H1 (cell line): ENCODE measurements at regions of chr9 and their contacts with region 1.

Region 1: DNA sequence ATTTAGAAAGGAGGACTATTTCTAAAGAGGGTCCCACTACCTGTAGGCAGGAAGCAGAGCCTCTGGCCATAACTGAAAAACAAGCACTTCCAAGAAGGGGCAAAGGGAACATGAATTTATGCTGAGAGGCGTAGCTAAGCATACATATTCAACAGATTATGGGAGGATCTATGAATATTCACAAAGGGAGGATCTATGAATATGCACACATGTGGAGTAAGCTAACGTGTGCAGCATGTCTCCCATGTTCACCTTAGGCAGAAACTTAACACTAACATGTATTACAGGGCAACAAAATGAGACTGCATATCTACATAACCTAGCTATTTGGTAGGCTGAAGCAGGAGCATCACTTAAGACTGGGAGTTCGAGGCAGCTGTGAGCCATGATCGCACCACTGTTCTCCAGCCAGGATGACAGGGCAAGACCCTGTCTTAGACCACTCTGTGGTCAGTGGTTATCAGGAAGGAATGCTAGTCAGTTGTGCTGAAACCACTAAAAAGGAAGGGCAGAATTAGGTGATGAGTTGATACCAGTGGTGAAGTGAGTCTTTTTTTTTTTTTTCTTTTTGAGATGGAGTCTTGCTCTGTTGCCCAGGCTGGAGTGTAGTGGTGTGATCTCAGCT is 20.8 kb downstream of the FXN start:
- DNase-seq: no peak
- H3K4me3 ChIP-seq: no peak overlapping the region
- H3K27ac ChIP-seq: no peak overlapping the region
- H3K4me1 ChIP-seq: peaks cover 0 to 7% (median 2%) of the 10 kb centered on the region in 4 experiments; a peak in 4 of 7 replicates
- H3K27me3 ChIP-seq: no peaks in the 10 kb centered on the region
- CTCF ChIP-seq: no peak
- EP300 ChIP-seq: no peak
- POLR2A ChIP-seq: no peak
- RAD21 ChIP-seq: no peak

Region 2: DNA sequence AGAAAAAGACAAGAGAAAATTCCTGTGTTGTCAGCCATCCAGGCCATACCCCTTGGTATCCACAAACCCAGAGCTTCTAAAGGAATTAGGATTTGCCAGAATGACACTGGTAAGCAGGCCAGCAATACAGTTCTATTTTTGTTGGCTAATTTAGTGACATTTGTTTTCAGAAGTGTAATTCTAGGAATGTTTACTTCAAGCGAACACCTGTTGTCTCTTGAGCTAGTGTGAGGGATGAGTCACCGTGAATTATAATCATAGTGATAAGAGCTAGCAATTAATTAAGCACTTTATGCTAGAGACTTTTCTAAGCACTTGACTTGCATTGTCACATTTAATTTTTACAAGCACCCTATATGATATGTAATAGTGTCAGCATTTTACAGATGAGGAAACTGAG is 141.6 kb before region 1 on chr9:
- CTCF ChIA-PET with region 1: no interaction called
- POLR2A ChIA-PET with region 1: no interaction called
- DNase-seq: no peak
- H3K4me3 ChIP-seq: no peak overlapping the region
- H3K27ac ChIP-seq: no peak overlapping the region
- H3K4me1 ChIP-seq: no peaks in the 10 kb centered on the region
- H3K27me3 ChIP-seq: no peaks in the 10 kb centered on the region
- CTCF ChIP-seq: no peak
- EP300 ChIP-seq: no peak
- POLR2A ChIP-seq: no peak
- RAD21 ChIP-seq: no peak

Region 3: DNA sequence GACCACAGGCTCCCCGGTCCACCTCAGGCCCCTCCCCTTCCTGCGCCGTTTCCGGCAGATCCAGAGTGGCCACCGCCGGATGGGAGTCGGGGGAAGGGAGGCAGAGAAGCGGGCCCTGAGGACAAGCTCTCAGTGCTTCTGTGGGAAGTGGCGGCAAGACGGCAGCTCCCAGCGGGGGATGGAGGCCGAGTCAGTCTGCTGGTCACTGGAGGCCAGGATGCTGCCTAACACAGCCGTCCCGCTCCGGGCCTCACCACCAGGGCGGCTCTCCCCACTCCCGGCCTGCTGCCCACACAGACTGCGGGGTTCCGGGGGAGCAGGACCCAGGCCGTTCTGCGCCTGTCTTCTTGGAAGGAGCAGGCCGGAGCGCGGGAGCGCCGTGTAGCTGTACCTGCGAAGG is 10.7 kb after region 1 on chr9:
- CTCF ChIA-PET with region 1: interaction called, 19 read pairs
- POLR2A ChIA-PET with region 1: no interaction called
- DNase-seq: peak in 1 of 2 experiments; percentile 71
- H3K4me3 ChIP-seq: no peak overlapping the region
- H3K27ac ChIP-seq: no peak overlapping the region
- H3K4me1 ChIP-seq: peaks cover 2 to 3% (median 2%) of the 10 kb centered on the region in 4 experiments; a peak in 4 of 7 replicates
- H3K27me3 ChIP-seq: no peaks in the 10 kb centered on the region
- CTCF ChIP-seq: peak in 2 of 3 experiments; percentile 55 to 60; a peak in 2 of 4 replicates
- EP300 ChIP-seq: no peak
- POLR2A ChIP-seq: no peak
- RAD21 ChIP-seq: peak; percentile 15 to 43; a peak in 3 of 4 replicates

Region 4: DNA sequence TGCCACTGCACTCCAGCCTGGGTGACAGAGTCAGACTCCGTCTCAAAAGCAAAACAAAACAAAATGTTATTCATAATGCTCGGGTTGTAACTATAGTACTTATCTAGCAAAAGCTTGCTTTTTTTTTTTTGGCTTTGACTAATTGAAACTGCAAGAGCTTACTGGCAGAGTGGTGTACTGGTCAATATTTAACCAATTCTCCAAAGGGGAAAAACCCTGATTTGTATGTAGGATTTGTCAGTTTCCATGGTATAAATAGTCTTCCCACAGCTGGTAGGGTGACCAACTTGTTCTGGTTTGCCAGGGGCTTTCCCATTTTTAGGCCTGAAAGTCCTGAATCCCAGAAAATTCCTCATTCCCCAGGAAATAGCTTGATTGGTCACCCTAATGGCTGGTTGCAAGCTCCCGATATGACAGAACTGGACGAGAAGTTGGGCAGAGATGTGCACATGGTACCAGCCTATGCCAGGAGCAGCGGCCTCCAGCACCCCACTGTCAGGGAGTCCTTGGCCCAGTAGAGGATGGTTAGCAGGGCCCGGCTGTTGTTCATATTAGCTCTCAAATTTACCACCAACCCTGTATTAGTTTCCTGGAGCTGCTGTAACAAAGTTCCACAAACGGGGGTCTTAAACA is 37.3 kb after region 1 on chr9:
- CTCF ChIA-PET with region 1: interaction called, 11 read pairs
- POLR2A ChIA-PET with region 1: interaction called, 3 read pairs
- DNase-seq: no peak
- H3K4me3 ChIP-seq: no peak overlapping the region
- H3K27ac ChIP-seq: no peak overlapping the region
- H3K4me1 ChIP-seq: peaks cover 0 to 13% (median 8%) of the 10 kb centered on the region in 4 experiments; a peak in 6 of 7 replicates
- H3K27me3 ChIP-seq: no peaks in the 10 kb centered on the region
- CTCF ChIP-seq: no peak
- EP300 ChIP-seq: no peak
- POLR2A ChIP-seq: no peak
- RAD21 ChIP-seq: no peak

Region 5: GRCh38 chr9:69157751-69158466 is 101.6 kb after region 1 on chr9:
- CTCF ChIA-PET with region 1: interaction called, 11 read pairs
- POLR2A ChIA-PET with region 1: no interaction called
- DNase-seq: no peak
- H3K4me3 ChIP-seq: no peak overlapping the region
- H3K27ac ChIP-seq: no peak overlapping the region
- H3K4me1 ChIP-seq: peaks cover 0 to 8% (median 0%) of the 10 kb centered on the region in 4 experiments; a peak in 2 of 7 replicates
- H3K27me3 ChIP-seq: no peaks in the 10 kb centered on the region
- CTCF ChIP-seq: peak; percentile 20 to 37 (median 21)
- EP300 ChIP-seq: no peak
- POLR2A ChIP-seq: no peak
- RAD21 ChIP-seq: peak; percentile 17 to 42; a peak in 3 of 4 replicates